PC-3 (cell line): ENCODE measurements at regions of chr11 and their contacts with region 1.

Region 1: DNA sequence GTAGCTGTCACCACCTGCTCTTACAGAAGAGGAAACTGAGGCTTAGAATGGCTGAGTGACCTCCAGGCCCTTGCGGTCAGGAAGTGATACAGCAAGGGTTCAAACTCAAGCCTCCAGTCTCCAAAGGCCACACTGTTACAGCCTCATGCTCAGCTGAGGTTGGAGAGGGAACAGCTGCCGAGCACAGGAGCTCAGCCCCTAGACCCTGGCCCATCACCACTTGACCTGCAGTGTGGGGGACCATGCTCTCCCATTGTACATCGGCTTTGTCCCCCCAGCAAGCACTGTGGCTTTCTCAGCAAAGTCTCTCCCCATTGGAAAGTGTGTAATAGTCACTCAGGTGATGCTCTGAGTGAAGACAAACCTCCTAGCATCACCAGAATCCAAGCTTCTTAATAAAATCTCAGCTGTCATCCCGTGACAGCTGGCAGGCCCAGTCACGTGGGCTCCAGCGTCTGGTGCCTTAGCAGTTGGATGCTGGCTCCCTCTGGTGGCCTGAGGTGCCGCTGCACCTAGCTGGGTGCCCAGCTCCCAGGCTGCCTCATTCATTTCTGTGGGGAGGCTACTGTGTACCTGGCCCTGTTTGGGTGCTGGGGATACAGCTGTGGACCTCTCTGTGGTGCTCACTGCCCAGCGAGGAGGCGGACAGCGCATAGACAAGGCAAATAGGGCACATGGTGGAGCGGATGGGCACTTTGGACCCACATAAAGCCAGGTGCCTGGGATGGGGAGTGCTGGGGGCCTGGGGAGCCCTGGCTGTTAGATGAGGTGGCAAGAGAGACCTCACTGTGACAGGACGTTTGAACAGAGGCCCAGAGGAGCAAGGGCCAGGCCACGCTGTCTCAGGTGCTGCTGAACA is 19.1 kb upstream of the MYRF start:
- DNase-seq: peak; percentile 96
- ATAC-seq: peak; percentile 42
- H3K4me3 ChIP-seq: no peak overlapping the region
- H3K27ac ChIP-seq: peak overlapping the region; percentile 13
- H3K4me1 ChIP-seq: peaks cover 48% of the 10 kb centered on the region
- H3K27me3 ChIP-seq: no peaks in the 10 kb centered on the region
- CTCF ChIP-seq: peak; percentile 99

Region 2: GRCh38 chr11:61567286-61568061 is 165.9 kb before region 1 on chr11:
- CTCF ChIA-PET with region 1: no interaction called
- POLR2A ChIA-PET with region 1: no interaction called
- intact Hi-C with region 1: no loop called
- DNase-seq: peak; percentile 81
- ATAC-seq: peak; percentile 69
- H3K4me3 ChIP-seq: no peak overlapping the region
- H3K27ac ChIP-seq: no peak overlapping the region
- H3K4me1 ChIP-seq: no peaks in the 10 kb centered on the region
- H3K27me3 ChIP-seq: no peaks in the 10 kb centered on the region
- CTCF ChIP-seq: peak; percentile 63; the same call in 1 of the 2 replicates

Region 3: GRCh38 chr11:61639816-61640443 is 93.4 kb before region 1 on chr11:
- CTCF ChIA-PET with region 1: interaction called, 6 read pairs
- POLR2A ChIA-PET with region 1: no interaction called
- intact Hi-C with region 1: loop called (anchors 1 kb)
- DNase-seq: peak; percentile 72
- ATAC-seq: peak; percentile 16; the same call in 1 of the 2 replicates
- H3K4me3 ChIP-seq: no peak overlapping the region
- H3K27ac ChIP-seq: no peak overlapping the region
- H3K4me1 ChIP-seq: peaks cover 18% of the 10 kb centered on the region
- H3K27me3 ChIP-seq: no peaks in the 10 kb centered on the region
- CTCF ChIP-seq: no peak

Region 4: GRCh38 chr11:61679893-61680621 is 53.3 kb before region 1 on chr11 and contains the start of gene DAGLA:
- CTCF ChIA-PET with region 1: interaction called, 6 read pairs
- POLR2A ChIA-PET with region 1: no interaction called
- intact Hi-C with region 1: loop called (anchors 1 kb)
- DNase-seq: peak; percentile 81
- ATAC-seq: peak; percentile 74
- H3K4me3 ChIP-seq: peak within 1 kb of the TSS; percentile 78
- H3K27ac ChIP-seq: no peak within 1 kb of the TSS
- H3K4me1 ChIP-seq: peaks cover 26% of the 10 kb centered on the region
- H3K27me3 ChIP-seq: peaks cover 20% of the 10 kb centered on the region
- CTCF ChIP-seq: peak; percentile 90
- total RNA-seq, gene DAGLA: 8.6 and 12.2 TPM in 2 replicates

Region 5: GRCh38 chr11:61697104-61697548 is 36.2 kb before region 1 on chr11:
- CTCF ChIA-PET with region 1: interaction called, 5 read pairs
- POLR2A ChIA-PET with region 1: no interaction called
- intact Hi-C with region 1: loop called (anchors 1 kb)
- DNase-seq: peak; percentile 98
- ATAC-seq: peak; percentile 65
- H3K4me3 ChIP-seq: no peak overlapping the region
- H3K27ac ChIP-seq: peak overlapping the region; percentile 92
- H3K4me1 ChIP-seq: peaks cover 74% of the 10 kb centered on the region
- H3K27me3 ChIP-seq: no peaks in the 10 kb centered on the region
- CTCF ChIP-seq: no peak

Region 6: GRCh38 chr11:61764606-61765260 is 31.4 kb after region 1 on chr11:
- CTCF ChIA-PET with region 1: no interaction called
- POLR2A ChIA-PET with region 1: interaction called, 10 read pairs
- intact Hi-C with region 1: no loop called
- DNase-seq: no peak
- ATAC-seq: no peak
- H3K4me3 ChIP-seq: no peak overlapping the region
- H3K27ac ChIP-seq: no peak overlapping the region
- H3K4me1 ChIP-seq: no peaks in the 10 kb centered on the region
- H3K27me3 ChIP-seq: no peaks in the 10 kb centered on the region
- CTCF ChIP-seq: no peak